ENCODE measurements at regions of chr9 and their contacts with region 1.

Region 1: DNA sequence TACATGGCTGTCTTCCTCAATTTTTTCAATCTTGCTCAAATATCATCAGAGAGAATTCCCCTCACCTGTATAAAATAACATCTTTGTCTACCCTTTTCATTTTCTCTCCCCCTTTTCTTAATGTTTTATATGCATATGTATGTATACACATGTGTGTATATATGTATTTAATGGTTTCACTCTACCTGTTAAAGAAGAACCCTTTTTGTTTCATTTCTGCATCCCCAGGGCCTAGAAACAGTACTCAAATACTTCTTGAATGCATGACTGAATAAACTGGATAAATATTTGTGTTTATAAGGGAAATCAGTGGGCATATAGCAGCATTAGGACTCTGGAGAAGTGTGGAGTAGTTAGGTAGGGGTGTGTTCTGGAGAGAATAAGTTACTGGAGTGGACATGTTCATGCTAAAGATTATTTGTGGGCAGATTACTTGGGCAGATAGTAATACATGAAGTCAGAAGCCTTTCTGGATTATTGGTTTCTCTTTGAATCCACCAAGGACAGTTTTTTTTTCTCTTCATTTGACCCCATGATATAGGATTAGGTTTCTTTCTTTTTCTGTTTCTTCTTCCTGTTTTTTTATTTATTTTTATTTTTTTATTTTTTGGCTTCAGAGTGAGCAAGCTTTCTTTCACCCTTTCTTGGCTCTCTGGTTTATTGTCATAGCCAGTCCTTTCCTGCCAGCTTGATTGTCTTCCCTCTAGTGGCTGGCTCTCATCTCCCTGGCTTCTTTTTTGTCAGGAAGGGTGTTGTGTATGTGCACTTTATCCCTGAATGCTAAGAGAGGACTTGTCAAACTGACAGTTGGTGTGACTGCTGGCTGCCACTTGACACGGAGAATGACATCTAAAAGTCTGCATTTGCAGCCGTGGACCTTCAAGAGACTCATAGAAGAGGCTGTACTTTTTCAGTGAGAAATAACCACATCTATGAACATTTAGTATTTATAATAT is 89.3 kb downstream of the ZCCHC7 start:
- DNase-seq: peak; percentile 8
- ATAC-seq: 0 out of 2 replicates have a peak, but pooled peaks have one; percentile 31
- H3K4me3 ChIP-seq: no peak overlapping the region
- H3K27ac ChIP-seq: no peak overlapping the region
- H3K4me1 ChIP-seq: peaks cover 7% of the 10 kb centered on the region; the same call in 1 of the 2 replicates
- H3K27me3 ChIP-seq: no peaks in the 10 kb centered on the region
- CTCF ChIP-seq: no peak; the same call in 1 of the 2 replicates

Region 2: DNA sequence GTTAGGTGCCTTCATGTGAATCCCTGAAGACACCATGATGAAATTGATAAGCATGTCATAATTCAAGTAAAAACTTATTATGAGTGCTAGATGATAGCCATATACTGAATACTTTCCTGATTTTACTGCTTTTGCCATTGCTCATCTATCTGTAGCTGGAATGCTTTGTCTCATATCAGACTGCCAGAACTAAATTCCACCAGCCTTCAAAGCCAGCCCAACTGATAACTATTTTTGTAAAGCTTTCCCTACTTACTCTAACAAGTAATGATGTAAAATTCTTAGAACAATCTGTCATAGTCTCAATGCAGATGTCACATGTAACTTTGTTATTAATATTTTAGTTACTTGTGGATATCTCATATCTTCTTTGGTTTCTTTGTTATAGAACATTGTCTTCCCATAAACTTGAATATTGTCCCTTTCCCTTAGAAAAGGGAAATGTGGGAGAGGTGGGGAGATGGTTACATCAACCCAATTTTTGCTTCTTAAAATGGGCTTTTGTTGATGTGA is 39.0 kb after region 1 on chr9:
- CTCF ChIA-PET with region 1: no interaction called
- POLR2A ChIA-PET with region 1: no interaction called
- intact Hi-C with region 1: loop called (anchors 5 kb)
- DNase-seq: no peak
- ATAC-seq: no peak
- H3K4me3 ChIP-seq: no peak overlapping the region
- H3K27ac ChIP-seq: no peak overlapping the region
- H3K4me1 ChIP-seq: no peaks in the 10 kb centered on the region
- H3K27me3 ChIP-seq: no peaks in the 10 kb centered on the region
- CTCF ChIP-seq: no peak

Measured in PC-3 (cell line).